Activated naive CD4-positive, alpha-beta T cell treated with anti-CD3 and anti-CD28 coated beads for 36 hours (primary cell): ENCODE measurements at regions of chr2 and their contacts with region 1.

Region 1: DNA sequence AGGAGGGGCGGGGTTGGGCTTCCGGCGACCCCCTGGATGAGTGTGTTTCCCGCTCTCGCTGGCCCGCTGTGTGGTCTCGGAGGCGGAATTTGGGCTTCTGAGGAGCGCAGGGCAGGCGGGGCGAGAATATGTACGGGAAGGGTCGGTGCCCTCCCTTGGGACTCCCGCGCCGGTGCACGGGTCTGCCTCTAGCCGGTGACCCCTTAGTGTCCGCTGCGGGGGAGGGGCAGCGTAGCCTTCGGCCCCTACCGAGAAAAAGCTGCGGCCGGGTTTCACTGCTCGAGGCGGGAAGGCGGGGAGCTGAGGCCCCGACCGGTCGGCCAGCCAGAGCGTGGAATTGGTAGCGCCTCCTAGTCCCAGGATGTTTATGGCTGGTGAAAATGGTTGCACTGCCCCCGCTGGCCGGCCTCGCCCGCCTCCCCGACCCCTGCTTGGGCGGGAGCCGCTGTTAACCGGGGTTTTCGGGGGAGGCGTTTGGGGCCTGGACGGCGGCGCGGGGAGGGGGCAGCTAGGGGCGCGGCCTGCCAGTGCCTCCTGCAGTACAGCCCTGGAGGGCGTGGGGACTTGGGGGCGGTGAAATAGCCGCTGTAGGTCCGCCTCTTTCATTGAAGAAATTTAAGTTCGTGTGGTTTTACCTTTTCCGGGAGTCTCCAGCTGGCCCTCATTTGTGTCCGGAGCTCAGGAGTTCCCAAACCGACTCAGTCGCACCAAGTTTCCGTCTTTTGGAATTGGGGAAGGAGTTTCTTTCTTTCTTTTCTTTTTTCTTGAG is at the start of gene UGP2:
- DNase-seq: peak; percentile 88
- H3K4me3 Mint-ChIP-seq: peak within 1 kb of the TSS; percentile 99
- H3K27ac Mint-ChIP-seq: peak within 1 kb of the TSS; percentile 99
- H3K4me1 Mint-ChIP-seq: peaks cover 37% of the 10 kb centered on the region
- H3K27me3 Mint-ChIP-seq: no peaks in the 10 kb centered on the region
- total RNA-seq, gene UGP2: 82.2 to 93.1 TPM

Region 2: DNA sequence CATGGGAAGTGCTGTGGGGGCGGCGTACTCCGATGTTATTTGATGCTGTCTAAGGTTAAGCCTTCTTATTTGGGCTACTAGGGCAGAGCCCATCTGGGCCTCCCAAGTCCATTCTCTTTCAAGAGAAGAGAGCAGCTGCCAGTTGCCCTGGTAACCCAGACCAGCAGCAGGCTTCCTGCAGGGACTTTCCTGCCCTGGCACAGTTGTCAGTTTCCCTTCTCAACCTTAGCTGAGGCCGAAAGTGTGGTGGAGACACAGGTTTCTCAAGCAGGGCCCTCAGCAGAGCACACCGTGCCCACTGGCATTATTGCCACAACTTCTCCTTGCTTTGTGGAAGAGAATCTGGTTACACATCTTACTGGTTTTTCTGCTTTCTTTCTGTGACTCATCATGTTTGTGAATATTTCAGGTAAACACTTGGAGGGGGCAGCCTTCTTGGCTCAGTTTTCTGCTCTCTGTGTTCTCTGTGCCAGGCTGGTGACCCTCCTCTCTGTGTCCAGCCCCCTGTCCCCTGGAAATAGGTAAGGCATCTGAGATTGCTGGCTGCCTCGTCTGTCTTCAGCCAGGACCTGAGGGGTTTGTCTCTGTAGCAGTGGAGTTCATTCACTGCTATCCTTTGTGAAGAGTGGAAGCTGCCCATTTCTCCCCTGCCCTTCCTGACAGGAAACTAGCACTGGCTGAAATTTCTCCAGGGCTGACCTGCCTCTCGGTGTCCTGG is 1534.5 kb before region 1 on chr2:
- CTCF ChIA-PET with region 1: no interaction called
- intact Hi-C with region 1: loop called (anchors 2 kb)
- DNase-seq: peak; percentile 73
- H3K4me3 Mint-ChIP-seq: no peak overlapping the region
- H3K27ac Mint-ChIP-seq: peak overlapping the region; percentile 90
- H3K4me1 Mint-ChIP-seq: peaks cover 74% of the 10 kb centered on the region
- H3K27me3 Mint-ChIP-seq: no peaks in the 10 kb centered on the region

Region 3: DNA sequence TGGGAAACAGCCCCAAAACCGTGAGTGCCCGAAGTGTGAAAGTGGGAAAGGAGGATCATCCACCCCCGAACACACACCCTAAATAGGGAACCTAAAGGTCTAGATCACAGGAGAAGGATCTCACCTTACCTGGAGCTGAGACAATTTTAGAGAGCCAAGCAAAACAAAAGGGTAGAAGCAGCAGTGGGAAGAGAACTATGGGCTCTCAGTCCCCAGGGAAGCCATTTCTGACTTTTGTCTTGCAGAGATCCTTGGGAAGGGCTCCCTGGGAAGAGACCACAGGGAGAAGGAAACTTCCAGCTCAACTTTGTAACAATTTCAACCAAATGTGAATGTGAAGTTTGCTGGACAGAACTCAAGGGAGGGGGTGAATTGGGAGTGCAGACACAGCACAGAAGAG is 363.8 kb before region 1 on chr2:
- CTCF ChIA-PET with region 1: no interaction called
- intact Hi-C with region 1: no loop called
- DNase-seq: no peak
- H3K4me3 Mint-ChIP-seq: no peak overlapping the region
- H3K27ac Mint-ChIP-seq: no peak overlapping the region
- H3K4me1 Mint-ChIP-seq: no peaks in the 10 kb centered on the region
- H3K27me3 Mint-ChIP-seq: no peaks in the 10 kb centered on the region

Region 4: DNA sequence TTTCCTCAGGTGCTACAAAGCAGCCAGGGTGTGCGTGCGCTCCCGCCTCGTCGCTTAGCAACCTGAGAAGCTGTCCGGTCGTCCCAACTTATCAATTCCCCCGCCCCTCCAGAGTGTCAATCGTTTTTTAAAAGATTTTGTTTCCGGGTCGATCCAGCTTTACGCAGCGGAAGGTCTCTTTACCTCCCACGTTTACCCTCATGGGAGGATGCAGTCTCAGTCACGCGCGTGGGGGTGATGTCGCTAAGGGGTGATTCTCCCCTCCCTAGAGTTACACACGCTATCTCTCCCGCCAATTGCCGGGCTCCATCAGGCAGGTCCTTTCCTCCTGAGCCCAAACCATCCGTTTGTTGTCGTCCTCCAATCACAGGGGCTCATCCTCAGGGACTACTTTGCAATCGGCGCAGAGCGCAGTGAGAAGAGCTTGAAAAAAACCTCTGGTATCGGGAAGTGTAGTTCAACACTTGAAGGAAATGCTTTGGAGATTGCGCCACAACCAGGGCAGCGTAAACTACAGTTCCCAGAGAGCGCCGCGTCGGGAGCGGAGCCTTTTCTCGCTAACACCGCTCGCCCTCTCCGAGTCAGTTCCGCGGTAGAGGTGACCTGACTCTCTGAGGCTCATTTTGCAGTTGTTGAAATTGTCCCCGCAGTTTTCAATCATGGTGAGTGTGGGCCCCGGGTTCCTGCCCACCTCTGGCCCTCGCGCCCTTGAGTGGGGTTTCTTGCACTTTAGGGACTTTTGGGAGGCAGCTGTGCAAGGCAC is 252.9 kb before region 1 on chr2 and contains the starts of genes MDH1 and WDPCP:
- CTCF ChIA-PET with region 1: no interaction called
- intact Hi-C with region 1: loop called (anchors 1 kb)
- DNase-seq: peak; percentile 95
- H3K4me3 Mint-ChIP-seq: peak within 1 kb of the TSS; percentile 99
- H3K27ac Mint-ChIP-seq: peak within 1 kb of the TSS; percentile 94
- H3K4me1 Mint-ChIP-seq: peaks cover 31% of the 10 kb centered on the region
- H3K27me3 Mint-ChIP-seq: no peaks in the 10 kb centered on the region
- total RNA-seq, gene MDH1: 269 to 275 TPM
- total RNA-seq, gene WDPCP: 5.6 to 5.7 TPM

Region 5: GRCh38 chr2:63679252-63679855 is 162.1 kb before region 1 on chr2:
- CTCF ChIA-PET with region 1: no interaction called
- intact Hi-C with region 1: no loop called
- DNase-seq: no peak
- H3K4me3 Mint-ChIP-seq: no peak overlapping the region
- H3K27ac Mint-ChIP-seq: no peak overlapping the region
- H3K4me1 Mint-ChIP-seq: peaks cover 18% of the 10 kb centered on the region
- H3K27me3 Mint-ChIP-seq: peaks cover 2% of the 10 kb centered on the region

Region 6: DNA sequence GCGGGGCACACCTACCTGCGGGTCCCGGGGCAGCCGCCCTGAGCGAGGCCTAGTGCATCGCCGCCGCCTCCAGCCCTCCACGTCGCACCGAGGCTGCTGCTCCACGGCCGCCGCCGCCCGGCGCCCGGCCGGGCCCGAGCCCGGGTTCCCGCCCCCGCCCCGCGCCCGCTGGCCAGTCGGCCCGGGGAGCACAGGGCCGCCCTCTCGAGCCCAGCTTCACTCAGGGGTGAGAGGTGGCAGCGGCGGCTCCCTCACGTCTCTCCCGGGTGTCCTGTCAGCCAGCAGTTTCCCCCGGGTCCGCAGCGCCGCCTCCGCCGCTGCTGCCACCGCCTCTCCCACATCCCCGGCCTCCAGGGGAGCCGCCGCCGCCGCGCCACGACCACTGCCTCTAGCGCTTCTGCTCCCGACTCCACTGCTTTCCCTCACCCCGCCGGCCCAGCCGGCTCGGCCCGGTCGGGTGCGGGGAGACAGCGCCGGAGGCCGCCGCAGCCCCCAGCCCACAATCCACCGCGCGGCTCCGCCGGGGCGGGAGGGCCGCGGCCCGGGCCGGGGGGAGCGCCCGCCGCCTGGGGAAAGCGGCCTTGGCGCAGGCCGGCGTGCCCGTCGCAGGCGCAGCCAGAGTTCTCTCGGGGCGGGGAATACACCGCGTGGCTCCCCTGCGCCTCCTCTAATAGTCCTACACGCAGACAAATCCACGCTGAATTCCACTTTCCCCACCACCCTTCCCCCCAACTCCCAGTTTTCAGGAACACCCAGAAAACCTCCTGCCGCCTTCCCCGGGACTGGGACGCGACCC is 177.7 kb after region 1 on chr2 and contains the start of gene VPS54:
- CTCF ChIA-PET with region 1: no interaction called
- intact Hi-C with region 1: loop called (anchors 2 kb)
- DNase-seq: peak; percentile 52
- H3K4me3 Mint-ChIP-seq: peak within 1 kb of the TSS; percentile 95
- H3K27ac Mint-ChIP-seq: peak within 1 kb of the TSS; percentile 95
- H3K4me1 Mint-ChIP-seq: peaks cover 34% of the 10 kb centered on the region
- H3K27me3 Mint-ChIP-seq: no peaks in the 10 kb centered on the region
- total RNA-seq, gene VPS54: 7.0 to 7.7 TPM

Region 7: DNA sequence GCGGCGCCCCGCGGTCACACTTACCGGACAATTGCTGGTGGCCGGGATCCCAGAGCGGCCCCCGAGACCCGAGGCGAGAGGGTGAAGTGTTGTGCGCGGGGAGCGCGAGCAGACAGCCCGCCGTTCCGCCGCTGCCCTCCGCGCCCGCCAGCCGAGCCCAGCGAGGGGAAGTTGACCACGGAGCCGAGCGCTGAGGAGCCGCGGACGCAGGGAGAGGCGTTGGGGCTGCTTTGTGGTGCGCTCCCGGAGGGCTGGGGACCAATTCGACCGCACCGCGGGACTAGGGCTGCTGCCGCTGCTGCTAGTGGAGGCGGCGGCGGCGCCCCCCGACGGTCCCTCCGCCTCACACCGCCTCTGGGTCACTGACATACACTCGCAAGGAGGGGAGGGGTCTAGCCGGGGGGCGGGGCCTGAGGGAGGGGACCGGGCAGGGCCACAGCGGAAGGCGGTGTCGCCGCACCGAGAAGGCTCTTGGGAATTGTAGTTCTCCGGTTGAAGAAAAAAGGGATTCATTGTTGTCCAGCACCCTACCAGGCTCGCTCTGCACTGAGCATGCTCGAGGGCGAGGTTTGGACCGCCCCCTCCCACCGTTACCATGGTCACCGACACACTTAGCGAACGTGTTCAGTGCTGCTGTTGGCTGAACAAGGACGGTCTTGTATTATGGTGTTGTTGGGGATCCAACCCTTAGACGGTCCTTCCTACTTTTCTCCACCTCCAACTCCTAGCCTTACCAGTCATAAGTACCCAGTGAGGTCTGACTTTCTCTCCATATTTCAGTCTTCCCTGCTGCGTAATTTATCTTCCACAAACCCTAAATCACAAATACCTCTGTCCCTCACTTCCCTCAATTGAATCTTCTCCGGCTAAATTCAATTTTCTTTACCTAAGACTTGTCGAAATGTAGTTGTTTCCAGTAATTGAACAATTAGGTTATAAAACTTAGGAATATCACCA is 302.9 kb after region 1 on chr2 and contains the start of gene PELI1:
- CTCF ChIA-PET with region 1: no interaction called
- intact Hi-C with region 1: loop called (anchors 1 kb)
- DNase-seq: peak; percentile 98
- H3K4me3 Mint-ChIP-seq: peak within 1 kb of the TSS; percentile 94
- H3K27ac Mint-ChIP-seq: peak within 1 kb of the TSS; percentile 94
- H3K4me1 Mint-ChIP-seq: peaks cover 31% of the 10 kb centered on the region
- H3K27me3 Mint-ChIP-seq: no peaks in the 10 kb centered on the region
- total RNA-seq, gene PELI1: 25.7 to 28.0 TPM

Region 8: GRCh38 chr2:65129826-65130663 is 1288.6 kb after region 1 on chr2 and contains the start of gene RAB1A:
- CTCF ChIA-PET with region 1: no interaction called
- intact Hi-C with region 1: loop called (anchors 5 kb)
- DNase-seq: peak; percentile 100
- H3K4me3 Mint-ChIP-seq: peak within 1 kb of the TSS; percentile 95
- H3K27ac Mint-ChIP-seq: peak within 1 kb of the TSS; percentile 94
- H3K4me1 Mint-ChIP-seq: peaks cover 35% of the 10 kb centered on the region
- H3K27me3 Mint-ChIP-seq: no peaks in the 10 kb centered on the region
- total RNA-seq, gene RAB1A: 60.8 to 61.3 TPM